Activated B cell treated with CpG ODN at 0.5 μM for 24 hours (primary cell): ENCODE measurements at regions of chr2 and their contacts with region 1.

Region 1: GRCh38 chr2:195612611-195613495 is 44.2 kb upstream of the SLC39A10 start:
- DNase-seq: no peak
- ATAC-seq: no peak
- H3K4me3 Mint-ChIP-seq: no peak overlapping the region
- H3K27ac Mint-ChIP-seq: no peak overlapping the region
- H3K4me1 Mint-ChIP-seq: peaks cover 22% of the 10 kb centered on the region
- H3K27me3 Mint-ChIP-seq: no peaks in the 10 kb centered on the region
- CTCF ChIP-seq: no peak

Region 2: DNA sequence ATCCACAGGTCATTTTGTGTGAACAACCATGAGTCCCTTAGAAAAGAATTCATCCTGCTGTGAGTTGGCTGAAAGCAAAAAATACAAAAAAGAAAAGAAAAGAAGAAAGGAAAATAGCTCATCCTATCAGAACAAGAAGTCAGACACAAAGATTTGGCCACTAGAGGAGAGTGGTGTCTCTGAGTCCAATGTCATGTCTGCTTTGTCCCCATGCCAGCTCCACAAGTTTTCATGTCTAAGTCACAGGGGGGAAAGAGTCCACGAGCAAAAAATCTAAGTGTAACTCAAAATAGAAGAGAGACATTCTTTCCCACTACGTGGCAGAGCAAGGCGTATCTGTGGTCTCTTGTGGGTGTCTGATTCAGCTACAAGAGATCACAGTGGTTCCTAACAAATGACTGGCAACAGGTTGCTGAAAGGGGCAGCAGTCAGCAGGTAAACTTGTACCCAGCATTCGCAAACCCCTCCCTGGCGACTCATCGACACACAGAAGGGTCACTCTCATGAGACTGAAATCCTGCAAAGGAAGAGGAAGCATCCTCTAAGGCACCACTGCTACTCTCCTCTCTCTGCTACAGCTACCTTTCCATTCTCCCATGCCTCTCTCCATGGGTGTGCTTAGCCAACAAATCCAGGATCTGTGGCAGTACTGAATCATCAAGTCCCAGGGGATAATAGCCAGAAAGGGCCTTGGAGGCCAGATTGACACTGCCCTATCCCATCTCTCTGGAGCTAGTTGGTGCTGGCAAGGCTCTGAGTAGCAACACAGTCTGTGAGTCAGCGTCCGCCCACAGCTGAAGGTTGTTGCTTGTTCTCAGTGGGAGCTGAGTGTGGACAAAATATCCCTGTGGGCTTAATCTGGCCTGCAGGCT is 78.8 kb before region 1 on chr2:
- CTCF ChIA-PET with region 1: no interaction called
- POLR2A ChIA-PET with region 1: interaction called, 10 read pairs
- intact Hi-C with region 1: no loop called
- DNase-seq: peak; percentile 28
- ATAC-seq: peak; percentile 73
- H3K4me3 Mint-ChIP-seq: peak overlapping the region; percentile 66
- H3K27ac Mint-ChIP-seq: peak overlapping the region; percentile 97
- H3K4me1 Mint-ChIP-seq: peaks cover 72% of the 10 kb centered on the region
- H3K27me3 Mint-ChIP-seq: no peaks in the 10 kb centered on the region
- CTCF ChIP-seq: no peak

Region 3: DNA sequence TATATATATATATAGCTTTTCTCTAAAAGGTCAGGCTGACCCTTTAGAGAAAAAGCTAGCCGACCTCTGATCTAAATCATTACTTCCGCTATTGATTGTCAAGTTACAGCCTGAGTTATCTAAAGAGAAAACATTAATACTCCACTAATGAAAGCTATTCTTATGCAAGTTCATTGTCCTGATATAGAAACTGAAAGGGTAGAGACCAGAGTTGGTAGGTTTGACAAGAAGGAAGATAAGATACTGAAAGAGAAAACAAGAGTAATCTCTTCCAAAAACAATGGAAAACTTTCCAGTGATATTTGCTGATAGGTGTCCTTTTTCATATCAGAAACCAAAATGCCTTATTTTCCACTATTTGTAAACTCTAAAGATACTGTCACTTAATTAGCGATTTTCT is 18.6 kb before region 1 on chr2:
- CTCF ChIA-PET with region 1: no interaction called
- POLR2A ChIA-PET with region 1: interaction called, 5 read pairs
- intact Hi-C with region 1: loop called (anchors 2 kb)
- DNase-seq: no peak
- ATAC-seq: no peak
- H3K4me3 Mint-ChIP-seq: no peak overlapping the region
- H3K27ac Mint-ChIP-seq: peak overlapping the region; percentile 9
- H3K4me1 Mint-ChIP-seq: peaks cover 29% of the 10 kb centered on the region
- H3K27me3 Mint-ChIP-seq: no peaks in the 10 kb centered on the region
- CTCF ChIP-seq: no peak